HEK293 (cell line): ENCODE measurements at regions of chr16 and their contacts with region 1.

Region 1: GRCh38 chr16:30335598-30336474 is 19.3 kb downstream of the CD2BP2 start:
- H3K4me3 ChIP-seq: peak overlapping the region; percentile 21; the same call in 1 of the 2 replicates
- H3K27ac ChIP-seq: no peak overlapping the region
- H3K4me1 ChIP-seq: no peaks in the 10 kb centered on the region
- CTCF ChIP-seq: no peak

Region 2: GRCh38 chr16:30355144-30355894 is 19.5 kb after region 1 on chr16 and contains the start of gene CD2BP2:
- CTCF ChIA-PET with region 1: interaction called, 4 read pairs
- POLR2A ChIA-PET with region 1: interaction called, 10 read pairs
- H3K4me3 ChIP-seq: peak within 1 kb of the TSS; percentile 95
- H3K27ac ChIP-seq: peak within 1 kb of the TSS; percentile 82
- H3K4me1 ChIP-seq: no peaks in the 10 kb centered on the region
- CTCF ChIP-seq: peak; percentile 63

Region 3: GRCh38 chr16:30541502-30542329 is 205.9 kb after region 1 on chr16:
- CTCF ChIA-PET with region 1: no interaction called
- POLR2A ChIA-PET with region 1: no interaction called
- H3K4me3 ChIP-seq: no peak overlapping the region
- H3K27ac ChIP-seq: no peak overlapping the region
- H3K4me1 ChIP-seq: peaks cover 6% of the 10 kb centered on the region; the same call in 1 of the 2 replicates
- CTCF ChIP-seq: no peak